ENCODE measurements at regions of chr17 and their contacts with region 1.

Region 1: DNA sequence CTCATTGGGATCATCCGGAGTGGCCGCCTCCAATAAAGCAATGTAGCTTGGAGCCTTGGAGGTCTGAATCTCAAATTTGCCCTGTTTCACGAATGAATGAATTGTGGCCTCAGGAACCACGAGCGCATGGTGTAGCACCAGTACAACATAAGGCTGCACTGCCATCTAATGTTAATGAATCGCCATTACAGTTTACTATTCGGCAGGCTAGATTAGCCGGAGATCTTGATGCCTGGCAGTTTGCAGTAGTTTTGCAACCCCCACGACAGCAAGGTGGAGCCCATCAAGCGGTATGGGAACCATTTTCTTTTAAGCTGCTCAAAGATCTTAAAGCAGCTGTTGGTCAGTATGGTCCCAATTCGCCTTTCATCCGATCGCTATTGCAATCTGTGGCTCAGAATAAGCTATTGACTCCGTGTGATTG is 18.8 kb downstream of the ALOX15B start:
- DNase-seq: peak; percentile 82
- H3K27ac ChIP-seq: no peak overlapping the region
- CTCF ChIP-seq: peak; percentile 77

Region 2: GRCh38 chr17:7972131-7972785 is 85.4 kb before region 1 on chr17:
- CTCF ChIA-PET with region 1: interaction called, 10 read pairs
- POLR2A ChIA-PET with region 1: no interaction called
- DNase-seq: no peak
- H3K27ac ChIP-seq: no peak overlapping the region
- CTCF ChIP-seq: 0 out of 2 replicates have a peak, but pooled peaks have one; percentile 8

Region 3: DNA sequence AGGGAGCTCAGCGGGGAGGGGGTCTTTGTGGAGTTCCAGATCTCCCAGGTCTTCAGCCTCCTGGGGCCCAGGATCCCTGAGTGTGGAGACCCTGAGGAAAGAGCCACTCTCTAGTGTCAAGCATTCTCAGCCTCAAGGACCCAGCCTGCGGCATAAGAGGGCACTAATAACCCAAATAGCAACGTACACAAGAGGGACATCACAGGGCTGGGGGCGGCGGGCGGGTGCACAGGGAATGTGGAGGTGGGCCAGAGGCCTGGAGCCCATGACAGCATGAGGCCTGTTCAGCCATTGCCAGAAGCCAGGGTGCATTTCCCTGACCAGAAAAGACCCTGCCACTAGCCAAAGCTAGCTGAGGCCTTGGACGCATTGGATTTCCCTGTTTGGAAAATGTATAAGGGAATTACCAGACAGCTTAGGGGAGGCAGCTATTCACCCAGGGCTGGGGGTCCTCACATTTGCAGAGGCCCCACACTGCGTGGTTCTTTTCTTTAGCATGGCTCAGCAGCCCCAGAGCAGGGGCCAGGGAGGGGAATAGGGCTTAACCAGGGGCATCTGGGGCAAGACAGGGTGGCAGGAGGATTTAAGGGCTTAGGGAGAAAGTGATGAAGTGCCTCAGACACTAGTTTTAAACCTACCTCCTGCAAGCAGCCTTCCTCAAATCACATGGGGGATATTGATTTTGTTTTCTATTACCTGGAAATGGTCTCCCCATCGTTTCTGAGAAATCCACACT is 32.4 kb before region 1 on chr17:
- CTCF ChIA-PET with region 1: no interaction called
- POLR2A ChIA-PET with region 1: no interaction called
- DNase-seq: no peak
- H3K27ac ChIP-seq: no peak overlapping the region
- CTCF ChIP-seq: no peak

Measured in RWPE1 (cell line).